Colonic mucosa (tissue), 4 donors: ENCODE measurements at regions of chr6 and their contacts with region 1.

Region 1: DNA sequence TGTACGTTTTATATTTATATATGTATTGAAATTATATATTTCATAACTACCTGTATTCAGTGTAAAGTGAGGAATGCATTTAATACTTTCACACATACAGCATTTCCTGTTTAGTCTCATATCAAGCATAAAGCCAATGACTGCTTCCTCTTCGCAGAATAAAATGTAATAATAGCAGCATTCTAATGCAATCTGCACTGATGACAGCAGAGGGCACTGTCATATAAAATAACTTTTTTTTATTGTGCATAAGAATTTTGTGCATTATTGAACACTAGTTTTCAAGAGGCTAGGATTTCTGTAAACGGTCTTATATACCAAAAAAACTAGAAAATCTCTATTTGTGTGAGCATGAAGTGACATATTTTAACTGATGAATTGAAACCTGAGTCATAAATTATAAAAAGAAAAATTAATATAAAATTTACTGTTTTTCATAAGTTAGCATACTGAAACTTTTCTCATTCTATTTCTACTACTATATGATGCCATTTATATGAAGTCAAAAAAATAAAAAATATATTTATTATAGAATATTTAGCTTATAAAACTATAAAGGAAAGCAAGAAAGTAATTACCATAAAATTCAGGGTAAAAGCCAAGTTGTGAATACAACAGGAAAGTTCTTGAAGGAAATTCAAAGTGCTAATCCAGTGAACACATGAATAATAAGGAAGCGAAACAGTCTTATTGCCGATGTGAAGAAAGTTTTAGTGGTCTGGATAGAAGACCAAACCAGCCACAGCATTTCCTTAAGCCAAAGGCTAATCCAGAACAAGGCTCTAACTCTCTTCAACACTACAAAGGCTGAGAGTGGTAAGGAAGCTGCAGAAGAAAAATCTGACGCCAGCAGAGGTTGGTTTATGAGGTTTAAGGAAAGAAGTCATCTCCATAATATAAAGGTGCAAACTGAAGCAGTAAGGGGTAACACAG is 36.3 kb downstream of the RNF146 start:
- DNase-seq: peak; percentile 47
- H3K4me3 ChIP-seq: no peak overlapping the region
- H3K27ac ChIP-seq: peak overlapping the region; percentile 62
- H3K4me1 ChIP-seq: no peaks in the 10 kb centered on the region
- H3K27me3 ChIP-seq: no peaks in the 10 kb centered on the region
- CTCF ChIP-seq: peak; percentile 72

Region 2: GRCh38 chr6:127058027-127058426 is 245.0 kb before region 1 on chr6:
- intact Hi-C with region 1: no loop called
- DNase-seq: no peak
- H3K4me3 ChIP-seq: no peak overlapping the region
- H3K27ac ChIP-seq: no peak overlapping the region
- H3K4me1 ChIP-seq: no peaks in the 10 kb centered on the region
- H3K27me3 ChIP-seq: no peaks in the 10 kb centered on the region
- CTCF ChIP-seq: no peak

Region 3: GRCh38 chr6:127222418-127222817 is 80.6 kb before region 1 on chr6:
- intact Hi-C with region 1: no loop called
- DNase-seq: no peak
- H3K4me3 ChIP-seq: no peak overlapping the region
- H3K27ac ChIP-seq: no peak overlapping the region
- H3K4me1 ChIP-seq: no peaks in the 10 kb centered on the region
- H3K27me3 ChIP-seq: no peaks in the 10 kb centered on the region
- CTCF ChIP-seq: no peak

Region 4: DNA sequence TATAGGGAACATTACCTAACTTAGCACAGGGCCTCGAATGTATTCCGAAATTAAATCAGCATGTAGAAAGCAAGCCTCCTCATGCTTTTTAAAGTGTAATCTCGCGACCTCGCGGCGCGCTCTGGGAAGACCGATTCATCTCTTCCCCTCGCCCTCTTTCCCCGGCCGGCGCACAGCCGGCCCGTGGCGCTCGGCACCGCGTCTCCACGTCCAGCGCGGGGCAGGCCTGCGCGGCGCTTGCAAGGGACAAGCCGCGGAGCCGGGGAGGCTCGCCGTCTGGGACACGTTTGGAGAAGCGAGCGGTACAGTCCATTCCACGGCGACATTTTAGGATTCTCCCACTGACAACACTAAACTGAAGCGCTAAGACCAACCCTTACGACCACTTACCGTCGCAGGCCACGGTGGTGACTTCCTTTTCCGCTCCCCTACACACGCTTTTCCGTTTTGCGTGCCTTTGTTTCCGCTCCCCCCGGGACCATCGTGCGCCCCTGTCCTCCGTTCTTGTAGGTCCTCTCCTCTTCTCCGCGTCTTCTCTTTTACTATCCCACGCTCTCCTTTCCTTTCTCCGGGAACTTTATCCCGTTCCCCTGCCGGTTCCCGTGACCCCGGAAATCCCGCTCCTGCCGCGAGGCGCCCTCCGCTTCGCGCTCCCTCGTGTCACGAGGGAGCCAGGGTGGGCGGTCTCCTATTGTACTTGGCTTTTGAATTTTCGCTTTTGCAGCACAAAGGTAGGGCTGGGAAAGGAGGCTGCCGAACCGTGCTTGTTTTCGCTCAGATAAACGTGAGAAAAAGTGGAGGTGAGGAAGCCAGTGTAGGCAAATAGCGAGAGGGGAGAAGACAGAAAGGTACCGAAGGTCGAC is 40.2 kb after region 1 on chr6 and contains the start of gene ECHDC1:
- intact Hi-C with region 1: loop called (anchors 5 kb)
- DNase-seq: peak; percentile 70
- H3K4me3 ChIP-seq: peak within 1 kb of the TSS; percentile 52
- H3K27ac ChIP-seq: peak within 1 kb of the TSS; percentile 86
- H3K4me1 ChIP-seq: peaks cover 9% of the 10 kb centered on the region
- H3K27me3 ChIP-seq: no peaks in the 10 kb centered on the region
- CTCF ChIP-seq: no peak
- total RNA-seq, gene ECHDC1: 56.1 to 111 TPM

Region 5: GRCh38 chr6:127420556-127420955 is 117.6 kb after region 1 on chr6:
- intact Hi-C with region 1: loop called (anchors 5 kb)
- DNase-seq: peak; percentile 42
- H3K4me3 ChIP-seq: no peak overlapping the region
- H3K27ac ChIP-seq: no peak overlapping the region
- H3K4me1 ChIP-seq: no peaks in the 10 kb centered on the region
- H3K27me3 ChIP-seq: no peaks in the 10 kb centered on the region
- CTCF ChIP-seq: peak; percentile 62

Region 6: GRCh38 chr6:127539272-127539671 is 236.3 kb after region 1 on chr6:
- intact Hi-C with region 1: loop called (anchors 10 kb)
- DNase-seq: no peak
- H3K4me3 ChIP-seq: no peak overlapping the region
- H3K27ac ChIP-seq: no peak overlapping the region
- H3K4me1 ChIP-seq: no peaks in the 10 kb centered on the region
- H3K27me3 ChIP-seq: no peaks in the 10 kb centered on the region
- CTCF ChIP-seq: no peak